Natural killer cell (primary cell): ENCODE measurements at regions of chr10 and their contacts with region 1.

Region 1: DNA sequence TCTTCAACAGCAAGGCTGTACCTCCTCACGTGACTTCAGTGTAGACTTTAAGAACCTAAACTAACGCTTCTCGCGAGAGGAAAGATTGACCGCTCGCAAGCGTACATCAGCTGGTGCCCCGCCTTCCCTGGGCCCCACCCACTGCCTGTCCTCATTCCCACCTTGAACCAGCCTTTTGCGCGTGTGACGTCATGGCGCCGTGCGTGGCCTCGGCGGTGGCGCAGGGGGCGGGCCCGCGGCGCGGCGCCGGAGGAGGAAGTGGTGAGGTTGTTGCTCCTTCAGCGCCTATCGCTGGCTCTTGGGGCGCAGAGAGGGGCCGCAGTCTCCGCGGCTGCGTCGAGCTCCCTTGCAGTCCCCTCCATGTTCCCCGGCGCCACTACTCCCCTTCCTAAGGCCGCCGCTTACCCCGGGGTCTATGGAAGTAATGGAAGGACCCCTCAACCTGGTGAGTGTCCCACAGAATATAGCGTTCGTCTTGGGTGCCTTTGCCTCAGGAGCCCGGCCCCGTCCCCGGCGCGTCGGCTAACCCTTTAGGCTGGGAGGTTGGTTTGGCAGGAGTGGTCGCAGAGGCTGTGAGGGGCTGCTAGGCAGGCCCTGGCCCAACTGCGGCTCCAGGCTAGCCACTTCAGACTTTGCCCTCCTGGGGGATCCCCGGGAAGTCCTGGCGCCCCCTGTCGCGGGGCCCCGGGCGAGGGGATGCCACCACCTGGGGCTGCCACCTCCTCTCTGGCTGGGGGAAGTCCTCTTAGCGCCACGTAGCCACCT is at the start of gene NRBF2:
- DNase-seq: peak; percentile 97 to 99
- ATAC-seq: peak; percentile 84 to 96 (median 86)
- H3K4me3 ChIP-seq: peak within 1 kb of the TSS; percentile 93
- H3K4me3 Mint-ChIP-seq: peak within 1 kb of the TSS; percentile 92
- H3K27ac ChIP-seq: peak within 1 kb of the TSS; percentile 98
- H3K27ac Mint-ChIP-seq: peak within 1 kb of the TSS; percentile 92 to 94
- H3K4me1 ChIP-seq: peaks cover 13% of the 10 kb centered on the region
- H3K4me1 Mint-ChIP-seq: peaks cover 30 to 42% of the 10 kb centered on the region in 2 donors
- H3K27me3 ChIP-seq: no peaks in the 10 kb centered on the region
- H3K27me3 Mint-ChIP-seq: peaks cover 8 to 17% of the 10 kb centered on the region in 2 donors
- CTCF ChIP-seq: peak; percentile 16
- total RNA-seq, gene NRBF2: 17.7 to 21.3 (median 18.2) TPM

Region 2: DNA sequence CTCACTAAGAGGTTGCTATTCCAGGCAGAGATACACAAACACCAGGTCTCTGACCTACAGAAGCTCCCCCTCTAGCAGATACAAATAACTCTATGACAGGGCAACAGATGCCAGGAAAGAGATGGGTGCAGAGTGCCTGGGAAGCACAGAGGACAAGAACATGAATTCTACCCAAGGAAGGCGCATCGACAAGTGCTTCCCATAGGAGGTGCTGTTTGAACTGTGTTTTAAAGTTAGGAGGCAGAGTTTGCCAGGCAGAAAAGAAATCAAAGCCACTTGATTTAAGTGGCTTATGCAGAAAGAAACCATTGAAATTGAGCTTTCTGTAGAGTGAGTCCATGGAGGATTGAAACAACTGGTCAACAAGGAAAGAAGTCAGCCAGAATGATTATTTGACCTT is 281.8 kb before region 1 on chr10:
- intact Hi-C with region 1: loop called (anchors 10 kb)
- DNase-seq: peak in 1 of 2 donors; percentile 41
- ATAC-seq: no peak
- H3K4me3 ChIP-seq: no peak overlapping the region
- H3K4me3 Mint-ChIP-seq: no peak overlapping the region
- H3K27ac ChIP-seq: no peak overlapping the region
- H3K27ac Mint-ChIP-seq: peak overlapping the region in 1 of 2 donors; percentile 35
- H3K4me1 ChIP-seq: peaks cover 32% of the 10 kb centered on the region
- H3K4me1 Mint-ChIP-seq: peaks cover 55 to 56% of the 10 kb centered on the region in 2 donors
- H3K27me3 ChIP-seq: no peaks in the 10 kb centered on the region
- H3K27me3 Mint-ChIP-seq: no peaks in the 10 kb centered on the region
- CTCF ChIP-seq: peak; percentile 37